ENCODE measurements at regions of chrX and their contacts with region 1.

Region 1: GRCh38 chrX:78708262-78708661 is 39.3 kb upstream of the LPAR4 start:
- DNase-seq: peak; percentile 33
- H3K4me3 ChIP-seq: no peak overlapping the region
- H3K27ac ChIP-seq: no peak overlapping the region
- H3K4me1 ChIP-seq: no peaks in the 10 kb centered on the region
- H3K27me3 ChIP-seq: no peaks in the 10 kb centered on the region
- CTCF ChIP-seq: peak; percentile 24 to 40
- POLR2A ChIP-seq: no peak

Region 2: GRCh38 chrX:78595901-78596502 is 112.3 kb before region 1 on chrX:
- CTCF ChIA-PET with region 1: interaction called, 32 read pairs
- POLR2A ChIA-PET with region 1: no interaction called
- dilution Hi-C with region 1: no loop called
- intact Hi-C with region 1: loop called (anchors 1 kb)
- DNase-seq: peak; percentile 1
- H3K4me3 ChIP-seq: no peak overlapping the region
- H3K27ac ChIP-seq: no peak overlapping the region
- H3K4me1 ChIP-seq: no peaks in the 10 kb centered on the region
- H3K27me3 ChIP-seq: no peaks in the 10 kb centered on the region
- CTCF ChIP-seq: peak in 1 of 2 donors; percentile 18
- POLR2A ChIP-seq: no peak

Region 3: DNA sequence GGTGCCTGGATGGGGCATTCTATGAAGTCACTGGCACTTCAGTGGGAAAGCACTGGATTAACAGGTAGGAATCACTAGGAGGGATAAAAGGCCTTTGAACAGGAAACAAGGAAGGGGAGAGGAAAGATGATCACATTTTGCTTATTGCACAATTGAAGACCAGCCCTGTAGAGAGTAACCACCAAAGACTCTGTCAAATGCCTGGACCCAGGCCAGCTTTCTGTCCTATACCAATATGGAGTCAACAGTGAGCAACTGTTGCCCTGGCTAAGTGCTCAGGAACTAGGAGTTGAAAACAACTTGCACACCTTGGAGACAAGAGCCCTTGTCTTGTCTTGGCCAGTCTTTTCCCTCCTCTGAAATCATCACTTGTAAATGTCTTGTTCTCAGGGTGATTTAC is 35.0 kb before region 1 on chrX:
- CTCF ChIA-PET with region 1: no interaction called
- POLR2A ChIA-PET with region 1: no interaction called
- dilution Hi-C with region 1: no loop called
- intact Hi-C with region 1: no loop called
- DNase-seq: no peak
- H3K4me3 ChIP-seq: no peak overlapping the region
- H3K27ac ChIP-seq: no peak overlapping the region
- H3K4me1 ChIP-seq: no peaks in the 10 kb centered on the region
- H3K27me3 ChIP-seq: no peaks in the 10 kb centered on the region
- CTCF ChIP-seq: no peak
- POLR2A ChIP-seq: no peak

Region 4: GRCh38 chrX:78754917-78755316 is 46.7 kb after region 1 on chrX:
- CTCF ChIA-PET with region 1: no interaction called
- POLR2A ChIA-PET with region 1: no interaction called
- dilution Hi-C with region 1: no loop called
- intact Hi-C with region 1: no loop called
- DNase-seq: no peak
- H3K4me3 ChIP-seq: no peak overlapping the region
- H3K27ac ChIP-seq: no peak overlapping the region
- H3K4me1 ChIP-seq: no peaks in the 10 kb centered on the region
- H3K27me3 ChIP-seq: no peaks in the 10 kb centered on the region
- CTCF ChIP-seq: no peak
- POLR2A ChIP-seq: no peak

Region 5: DNA sequence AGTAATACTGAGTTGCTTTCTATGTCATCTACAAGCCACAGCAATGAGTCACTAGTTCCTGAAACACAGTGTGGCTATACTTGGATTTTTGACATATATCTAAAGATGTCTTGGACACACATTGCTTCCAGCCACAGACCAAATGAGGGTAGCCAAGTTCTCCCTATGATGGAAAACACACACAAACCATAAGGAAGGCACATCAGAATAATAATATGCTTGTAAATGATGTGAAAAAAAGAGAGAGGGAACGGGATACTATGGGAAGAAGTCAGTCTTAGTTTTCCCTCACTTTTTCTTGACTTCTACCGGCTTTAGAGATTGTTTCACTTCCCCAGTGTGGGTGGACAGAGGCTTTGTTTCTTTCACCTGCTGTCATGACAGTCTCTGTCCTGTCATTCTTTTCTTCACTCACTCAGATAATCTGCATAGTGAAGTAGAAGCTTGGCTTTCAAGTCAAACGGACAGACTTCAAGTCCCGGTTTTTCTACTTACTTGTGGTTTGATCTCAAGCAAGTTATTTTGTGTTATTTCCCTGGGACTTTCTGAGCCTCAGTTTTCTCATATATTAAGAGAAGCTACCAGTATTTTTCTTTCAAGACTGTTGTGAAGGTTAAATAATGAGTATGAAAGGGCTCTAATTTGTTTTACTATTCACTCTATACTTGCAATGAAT is 271.7 kb after region 1 on chrX:
- CTCF ChIA-PET with region 1: no interaction called
- POLR2A ChIA-PET with region 1: no interaction called
- dilution Hi-C with region 1: no loop called
- intact Hi-C with region 1: no loop called
- DNase-seq: no peak
- H3K4me3 ChIP-seq: no peak overlapping the region
- H3K27ac ChIP-seq: no peak overlapping the region
- H3K4me1 ChIP-seq: no peaks in the 10 kb centered on the region
- H3K27me3 ChIP-seq: no peaks in the 10 kb centered on the region
- CTCF ChIP-seq: no peak
- POLR2A ChIP-seq: no peak